ENCODE measurements at regions of chr1 and their contacts with region 1.

Region 1: DNA sequence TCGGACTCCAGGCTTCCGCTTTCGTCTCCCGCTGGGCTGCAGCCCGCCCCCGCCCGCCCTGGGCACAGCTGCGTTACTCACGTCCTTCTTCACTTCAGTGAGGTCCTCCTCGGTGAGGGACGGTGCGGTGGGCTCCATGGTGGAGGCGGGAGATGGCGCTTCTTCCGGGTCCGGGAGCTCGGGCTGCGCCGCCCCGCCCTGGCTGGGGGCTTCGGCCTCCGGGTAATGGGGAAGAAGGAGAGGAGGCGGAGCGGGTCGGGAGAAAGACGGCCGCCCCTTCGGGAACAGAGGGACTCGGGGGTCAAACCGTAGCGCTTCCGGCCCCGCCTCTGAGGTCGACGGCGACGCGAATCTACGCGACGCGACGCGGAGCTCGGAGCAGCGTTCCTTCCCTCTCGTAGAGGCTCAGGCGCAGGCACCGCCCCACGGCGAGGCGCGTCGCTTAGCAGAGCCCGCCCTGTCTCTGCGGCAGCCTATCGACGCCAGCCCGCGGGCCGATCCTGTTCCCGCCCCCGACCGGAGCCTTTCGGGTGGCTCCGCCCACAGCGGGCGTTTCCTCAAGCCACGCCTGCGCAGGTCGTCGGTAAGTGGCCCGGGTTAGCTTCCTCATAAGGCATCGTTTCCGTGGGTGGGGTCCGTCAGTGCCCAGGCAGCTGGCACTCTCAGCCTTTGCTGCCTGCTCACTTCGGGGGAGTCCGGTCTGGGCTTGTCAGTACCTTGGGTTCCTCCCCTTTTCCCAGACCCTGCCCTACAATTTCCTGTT is at the start of gene BCL10:
- DNase-seq: peak; percentile 97 to 99
- ATAC-seq: peak; percentile 94 to 99 (median 96)
- H3K4me3 ChIP-seq: peak within 1 kb of the TSS; percentile 63
- H3K4me3 Mint-ChIP-seq: peak within 1 kb of the TSS; percentile 86
- H3K27ac ChIP-seq: peak within 1 kb of the TSS; percentile 89
- H3K27ac Mint-ChIP-seq: peak within 1 kb of the TSS; percentile 88 to 90
- H3K4me1 ChIP-seq: peaks cover 9% of the 10 kb centered on the region
- H3K4me1 Mint-ChIP-seq: peaks cover 36 to 37% of the 10 kb centered on the region in 2 donors
- H3K27me3 ChIP-seq: no peaks in the 10 kb centered on the region
- H3K27me3 Mint-ChIP-seq: peaks cover 5 to 8% of the 10 kb centered on the region in 2 donors
- CTCF ChIP-seq: no peak
- total RNA-seq, gene BCL10: 46.3 to 49.2 (median 48.7) TPM

Region 2: GRCh38 chr1:85179522-85179921 is 96.9 kb before region 1 on chr1:
- intact Hi-C with region 1: no loop called
- DNase-seq: peak in 1 of 2 donors; percentile 65
- ATAC-seq: peak in 1 of 3 donors; percentile 39
- H3K4me3 ChIP-seq: no peak overlapping the region
- H3K4me3 Mint-ChIP-seq: no peak overlapping the region
- H3K27ac ChIP-seq: no peak overlapping the region
- H3K27ac Mint-ChIP-seq: no peak overlapping the region
- H3K4me1 ChIP-seq: no peaks in the 10 kb centered on the region
- H3K4me1 Mint-ChIP-seq: peaks cover 0 to 4% of the 10 kb centered on the region in 2 donors
- H3K27me3 ChIP-seq: no peaks in the 10 kb centered on the region
- H3K27me3 Mint-ChIP-seq: peaks cover 5 to 17% of the 10 kb centered on the region in 2 donors
- CTCF ChIP-seq: no peak

Region 3: DNA sequence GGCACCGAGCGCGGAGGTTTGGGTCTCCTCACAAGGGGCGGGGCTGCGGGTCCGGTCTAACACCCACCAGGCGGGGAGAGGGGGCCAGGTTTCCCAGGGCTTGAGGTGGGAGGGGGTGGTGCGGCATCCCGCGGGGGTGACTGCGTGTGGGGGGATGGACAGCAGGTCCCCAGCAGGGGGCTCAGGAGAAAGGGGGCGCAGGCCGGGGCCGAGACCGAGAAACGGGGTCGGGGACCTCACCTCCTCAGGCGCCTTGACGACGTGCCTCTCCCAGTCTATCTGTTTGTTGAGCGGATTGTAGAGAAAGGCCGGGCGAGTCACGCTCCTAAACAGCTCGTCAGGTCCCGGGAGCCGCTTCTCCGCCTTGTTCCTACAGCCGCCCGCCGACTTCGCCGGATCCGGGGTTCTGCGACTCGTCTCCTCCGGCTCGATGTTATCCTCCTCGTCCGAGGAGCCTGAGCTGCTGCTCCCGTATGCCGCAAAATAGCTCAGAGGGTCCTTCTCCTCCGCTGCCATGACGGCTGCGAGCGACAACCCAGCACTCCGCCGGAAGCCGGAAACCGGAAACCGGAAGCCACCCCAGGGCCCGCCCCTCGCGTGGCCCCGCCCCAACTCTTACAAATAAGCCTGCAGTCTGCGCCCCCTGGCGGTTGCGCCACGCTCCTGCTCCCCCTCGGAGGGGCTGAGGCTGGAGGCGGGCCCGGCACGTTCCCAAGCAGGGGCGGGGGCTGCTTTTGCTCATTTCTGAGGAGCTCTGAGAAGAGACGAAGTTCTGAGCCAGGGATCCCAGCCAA is 17.1 kb before region 1 on chr1 and contains the start of gene C1orf52:
- intact Hi-C with region 1: loop called (anchors 1 kb)
- DNase-seq: peak; percentile 94 to 97
- ATAC-seq: peak; percentile 96 to 100 (median 97)
- H3K4me3 ChIP-seq: peak within 1 kb of the TSS; percentile 86
- H3K4me3 Mint-ChIP-seq: peak within 1 kb of the TSS; percentile 98
- H3K27ac ChIP-seq: peak within 1 kb of the TSS; percentile 76
- H3K27ac Mint-ChIP-seq: peak within 1 kb of the TSS; percentile 94 to 98
- H3K4me1 ChIP-seq: peaks cover 20% of the 10 kb centered on the region
- H3K4me1 Mint-ChIP-seq: peaks cover 31 to 33% of the 10 kb centered on the region in 2 donors
- H3K27me3 ChIP-seq: no peaks in the 10 kb centered on the region
- H3K27me3 Mint-ChIP-seq: no peaks in the 10 kb centered on the region
- CTCF ChIP-seq: peak; percentile 99
- total RNA-seq, gene C1orf52: 50.6 to 67.3 (median 58.9) TPM

Region 4: GRCh38 chr1:85297855-85298629 is 21.6 kb after region 1 on chr1:
- intact Hi-C with region 1: loop called (anchors 1 kb)
- DNase-seq: peak; percentile 60 to 82
- ATAC-seq: peak; percentile 90 to 99 (median 92)
- H3K4me3 ChIP-seq: no peak overlapping the region
- H3K4me3 Mint-ChIP-seq: peak overlapping the region; percentile 79
- H3K27ac ChIP-seq: peak overlapping the region; percentile 9
- H3K27ac Mint-ChIP-seq: peak overlapping the region; percentile 50 to 75
- H3K4me1 ChIP-seq: peaks cover 19% of the 10 kb centered on the region
- H3K4me1 Mint-ChIP-seq: peaks cover 29 to 30% of the 10 kb centered on the region in 2 donors
- H3K27me3 ChIP-seq: peaks cover 6% of the 10 kb centered on the region
- H3K27me3 Mint-ChIP-seq: peaks cover 38 to 53% of the 10 kb centered on the region in 2 donors
- CTCF ChIP-seq: no peak

Region 5: DNA sequence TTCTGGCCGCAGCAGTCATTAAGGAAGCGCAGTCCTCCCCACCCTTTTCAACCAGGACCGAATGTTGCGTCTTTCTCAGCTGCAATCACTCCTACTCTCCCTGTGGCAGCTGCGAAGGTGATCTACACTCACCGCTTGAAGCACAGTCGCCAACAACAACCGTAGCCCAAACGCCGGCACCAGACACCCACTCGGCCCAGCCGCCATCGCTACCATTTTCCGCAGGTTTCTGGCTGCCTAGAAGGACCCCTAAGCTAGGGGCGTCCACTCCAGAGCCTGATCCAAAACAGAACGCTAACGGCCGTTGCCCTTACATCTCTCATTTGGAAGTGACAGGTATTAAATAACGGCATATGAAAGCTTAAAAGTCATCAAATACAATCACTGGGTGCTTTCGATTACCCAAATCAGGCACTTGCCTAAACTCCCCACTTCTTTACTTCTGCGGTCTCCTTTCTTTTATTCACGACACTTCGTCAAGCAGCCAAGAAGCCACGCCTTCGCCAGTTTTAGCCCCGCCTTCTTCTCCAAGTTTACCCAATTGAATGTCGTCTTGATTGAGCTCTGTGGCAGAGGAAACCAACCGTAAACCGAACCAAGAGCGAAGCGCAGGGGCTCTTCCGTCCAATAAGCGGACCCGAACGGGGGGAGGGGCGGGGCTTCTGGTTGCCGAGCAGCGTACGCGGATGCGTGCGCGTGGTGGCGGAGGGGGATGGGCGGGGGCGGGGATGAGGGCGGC is 1637.7 kb after region 1 on chr1 and contains the start of gene SELENOF:
- intact Hi-C with region 1: loop called (anchors 10 kb)
- DNase-seq: peak; percentile 98 to 100
- ATAC-seq: peak; percentile 87 to 96 (median 90)
- H3K4me3 ChIP-seq: peak within 1 kb of the TSS; percentile 84
- H3K4me3 Mint-ChIP-seq: no peak within 1 kb of the TSS
- H3K27ac ChIP-seq: peak within 1 kb of the TSS; percentile 94
- H3K27ac Mint-ChIP-seq: no peak within 1 kb of the TSS
- H3K4me1 ChIP-seq: peaks cover 9% of the 10 kb centered on the region
- H3K4me1 Mint-ChIP-seq: peaks cover 7 to 39% of the 10 kb centered on the region in 2 donors
- H3K27me3 ChIP-seq: no peaks in the 10 kb centered on the region
- H3K27me3 Mint-ChIP-seq: no peaks in the 10 kb centered on the region
- CTCF ChIP-seq: no peak
- total RNA-seq, gene SELENOF: 124 to 163 (median 137) TPM